H1 (cell line): ENCODE measurements at regions of chr20 and their contacts with region 1.

Region 1: DNA sequence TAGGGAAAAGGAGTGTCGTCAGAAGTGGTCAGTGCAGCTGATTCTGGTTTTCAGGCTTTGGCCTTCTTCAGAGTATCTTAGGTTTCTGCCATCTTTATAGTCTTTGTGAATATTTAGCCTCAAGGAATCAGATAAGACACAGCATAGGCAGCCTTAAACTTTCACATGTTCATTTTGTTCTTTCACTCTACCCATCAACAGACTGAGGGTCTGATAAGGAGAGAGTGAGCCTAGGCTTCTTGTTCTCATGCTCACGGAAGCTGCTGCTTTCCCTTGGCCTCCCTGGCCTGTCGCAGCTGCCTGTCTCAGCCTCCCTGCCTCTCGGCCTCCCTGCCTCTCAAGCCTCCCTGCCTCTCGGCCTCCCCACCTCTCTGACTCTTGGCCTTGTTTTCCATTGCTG is 20.1 kb downstream of the RTF2 start:
- DNase-seq: no peak
- H3K4me3 ChIP-seq: no peak overlapping the region
- H3K27ac ChIP-seq: no peak overlapping the region
- H3K4me1 ChIP-seq: no peaks in the 10 kb centered on the region
- H3K27me3 ChIP-seq: no peaks in the 10 kb centered on the region
- CTCF ChIP-seq: no peak
- EP300 ChIP-seq: no peak
- POLR2A ChIP-seq: no peak
- RAD21 ChIP-seq: no peak

Region 2: DNA sequence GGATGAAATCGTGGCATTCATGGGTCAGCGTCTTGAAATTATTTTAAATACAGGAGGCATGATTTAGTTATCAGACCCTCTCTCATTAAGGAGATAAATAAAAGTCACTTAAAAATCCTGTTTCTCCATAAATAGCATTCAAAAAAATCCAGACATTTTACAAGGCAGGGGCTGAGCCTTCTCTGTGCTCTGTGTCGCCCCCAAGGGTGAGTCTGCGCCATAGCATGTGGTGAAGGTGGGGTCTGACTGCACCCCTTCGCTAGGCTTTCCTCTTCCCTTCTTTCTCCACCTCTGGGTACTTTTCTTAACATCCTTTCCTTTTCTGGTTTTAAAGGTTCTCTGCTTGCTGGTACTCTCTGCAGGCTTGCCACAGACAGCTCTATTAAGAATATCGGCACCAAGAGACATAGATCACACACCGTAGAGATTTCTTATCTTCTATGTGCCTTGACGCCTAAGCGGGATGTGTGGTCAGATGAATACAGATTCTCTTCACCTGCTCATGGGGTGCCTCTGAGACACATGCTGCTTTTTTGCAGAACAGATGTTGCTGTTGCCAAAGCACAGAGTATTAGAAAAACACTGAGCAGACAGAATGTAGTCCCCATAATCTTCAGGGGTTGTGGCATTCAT is 15.9 kb after region 1 on chr20:
- CTCF ChIA-PET with region 1: interaction called, 14 read pairs
- POLR2A ChIA-PET with region 1: no interaction called
- DNase-seq: peak in 1 of 2 experiments; percentile 63
- H3K4me3 ChIP-seq: no peak overlapping the region
- H3K27ac ChIP-seq: no peak overlapping the region
- H3K4me1 ChIP-seq: no peaks in the 10 kb centered on the region
- H3K27me3 ChIP-seq: no peaks in the 10 kb centered on the region
- CTCF ChIP-seq: peak; percentile 37 to 86 (median 81)
- EP300 ChIP-seq: no peak
- POLR2A ChIP-seq: no peak
- RAD21 ChIP-seq: peak; percentile 24 to 33; a peak in 1 of 4 replicates